ENCODE measurements at regions of chr19 and their contacts with region 1.

Region 1: GRCh38 chr19:49391581-49392399 is 3.7 kb downstream of the KASH5 start:
- DNase-seq: peak; percentile 67 to 89 (median 76)
- ATAC-seq: peak; percentile 76
- H3K4me3 ChIP-seq: no peak overlapping the region
- H3K4me3 Mint-ChIP-seq: no peak overlapping the region
- H3K27ac ChIP-seq: no peak overlapping the region
- H3K27ac Mint-ChIP-seq: no peak overlapping the region
- H3K4me1 ChIP-seq: peaks cover 23% of the 10 kb centered on the region
- H3K4me1 Mint-ChIP-seq: peaks cover 19% of the 10 kb centered on the region
- H3K27me3 ChIP-seq: no peaks in the 10 kb centered on the region
- H3K27me3 Mint-ChIP-seq: no peaks in the 10 kb centered on the region
- CTCF ChIP-seq: peak; percentile 95

Region 2: GRCh38 chr19:49374665-49375434 is 16.9 kb before region 1 on chr19:
- CTCF ChIA-PET with region 1: no interaction called
- POLR2A ChIA-PET with region 1: no interaction called
- intact Hi-C with region 1: no loop called
- DNase-seq: no peak
- ATAC-seq: no peak
- H3K4me3 ChIP-seq: no peak overlapping the region
- H3K4me3 Mint-ChIP-seq: no peak overlapping the region
- H3K27ac ChIP-seq: no peak overlapping the region
- H3K27ac Mint-ChIP-seq: no peak overlapping the region
- H3K4me1 ChIP-seq: no peaks in the 10 kb centered on the region
- H3K4me1 Mint-ChIP-seq: no peaks in the 10 kb centered on the region
- H3K27me3 ChIP-seq: no peaks in the 10 kb centered on the region
- H3K27me3 Mint-ChIP-seq: peaks cover 16% of the 10 kb centered on the region
- CTCF ChIP-seq: no peak

Region 3: DNA sequence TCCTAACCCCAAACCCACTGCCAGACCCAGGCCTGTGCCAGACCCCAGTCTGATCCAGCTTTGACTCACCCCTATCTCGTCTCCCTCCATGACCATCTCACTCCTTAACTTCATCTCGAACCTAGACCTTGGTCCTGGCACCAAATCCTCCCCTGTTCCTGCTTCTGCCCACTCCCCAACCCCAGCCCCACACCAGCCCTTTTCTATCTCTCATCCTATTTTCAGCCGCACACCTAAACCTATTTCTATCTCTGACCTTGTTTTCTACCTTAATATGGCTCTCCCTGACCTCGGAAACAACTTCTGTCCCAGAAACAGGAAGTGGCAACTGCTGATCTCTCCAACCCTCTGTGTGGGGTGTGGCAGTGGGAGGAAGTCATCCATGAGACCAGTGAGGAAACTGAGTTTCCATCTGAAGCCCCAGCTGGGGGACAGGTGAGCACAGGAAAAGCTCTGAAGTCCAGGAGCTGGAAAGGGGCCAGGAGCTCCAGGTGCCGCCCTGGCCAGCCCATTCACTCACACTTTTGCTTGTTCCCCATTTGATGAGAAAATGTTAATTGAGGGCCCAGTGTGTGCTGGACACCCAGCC is 17.7 kb after region 1 on chr19:
- CTCF ChIA-PET with region 1: interaction called, 10 read pairs
- POLR2A ChIA-PET with region 1: interaction called, 6 read pairs
- intact Hi-C with region 1: no loop called
- DNase-seq: peak in 4 of 14 experiments; percentile 42 to 75 (median 57)
- ATAC-seq: peak; percentile 61
- H3K4me3 ChIP-seq: peak overlapping the region; percentile 11
- H3K4me3 Mint-ChIP-seq: peak overlapping the region; percentile 49
- H3K27ac ChIP-seq: peak overlapping the region; percentile 17 to 65
- H3K27ac Mint-ChIP-seq: peak overlapping the region; percentile 82
- H3K4me1 ChIP-seq: peaks cover 72% of the 10 kb centered on the region
- H3K4me1 Mint-ChIP-seq: peaks cover 67% of the 10 kb centered on the region
- H3K27me3 ChIP-seq: no peaks in the 10 kb centered on the region
- H3K27me3 Mint-ChIP-seq: no peaks in the 10 kb centered on the region
- CTCF ChIP-seq: no peak

Region 4: DNA sequence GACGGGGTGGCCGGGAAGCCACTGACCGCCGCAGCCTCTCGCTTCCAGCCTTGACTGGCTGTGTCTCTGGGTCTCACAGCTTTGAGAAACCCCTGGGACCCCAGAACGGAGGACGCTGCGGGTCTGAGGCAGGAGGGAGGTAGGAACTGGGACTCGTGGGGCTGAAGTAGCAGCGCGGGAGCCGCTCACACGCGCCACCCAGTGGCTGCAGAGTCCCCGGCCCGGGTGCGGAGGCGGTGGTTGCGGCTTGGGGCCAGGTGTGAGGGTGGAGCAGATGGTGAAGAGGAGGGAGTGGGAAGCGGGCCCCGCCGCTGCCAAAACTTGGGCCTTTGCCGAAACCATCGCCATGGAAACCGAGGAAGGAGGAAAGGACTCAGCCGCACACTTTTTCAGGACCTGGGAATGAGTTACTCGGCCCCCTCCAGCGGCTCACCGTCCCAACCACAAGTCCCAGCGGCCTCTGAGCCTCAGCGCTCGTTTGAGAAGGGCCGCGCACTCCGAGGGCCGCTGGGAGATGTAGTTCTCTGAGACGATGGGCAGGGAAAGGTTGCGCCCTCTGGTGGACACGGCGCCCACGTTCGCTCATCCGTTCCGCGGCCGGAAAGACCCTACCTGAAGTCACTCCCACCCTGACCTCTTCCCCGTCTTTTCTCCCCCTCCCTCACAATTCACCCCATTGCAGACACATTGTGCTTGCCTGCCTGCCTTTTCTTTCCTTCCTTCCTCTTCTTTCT is 51.7 kb after region 1 on chr19:
- CTCF ChIA-PET with region 1: interaction called, 15 read pairs
- POLR2A ChIA-PET with region 1: interaction called, 4 read pairs
- intact Hi-C with region 1: loop called (anchors 1 kb)
- DNase-seq: peak; percentile 89 to 96 (median 91)
- ATAC-seq: peak; percentile 89
- H3K4me3 ChIP-seq: peak overlapping the region; percentile 66
- H3K4me3 Mint-ChIP-seq: peak overlapping the region; percentile 85
- H3K27ac ChIP-seq: no peak overlapping the region
- H3K27ac Mint-ChIP-seq: peak overlapping the region; percentile 84
- H3K4me1 ChIP-seq: peaks cover 47% of the 10 kb centered on the region
- H3K4me1 Mint-ChIP-seq: peaks cover 41% of the 10 kb centered on the region
- H3K27me3 ChIP-seq: peaks cover 39% of the 10 kb centered on the region in 2 experiments
- H3K27me3 Mint-ChIP-seq: peaks cover 47% of the 10 kb centered on the region
- CTCF ChIP-seq: peak; percentile 95

Region 5: GRCh38 chr19:49473868-49474544 is 82.2 kb after region 1 on chr19 and contains the start of gene FLT3LG:
- CTCF ChIA-PET with region 1: interaction called, 17 read pairs
- POLR2A ChIA-PET with region 1: interaction called, 5 read pairs
- intact Hi-C with region 1: loop called (anchors 1 kb)
- DNase-seq: peak; percentile 85 to 98 (median 90)
- ATAC-seq: peak; percentile 49
- H3K4me3 ChIP-seq: peak within 1 kb of the TSS; percentile 97
- H3K4me3 Mint-ChIP-seq: peak within 1 kb of the TSS; percentile 100
- H3K27ac ChIP-seq: peak within 1 kb of the TSS; percentile 90 to 98
- H3K27ac Mint-ChIP-seq: peak within 1 kb of the TSS; percentile 98
- H3K4me1 ChIP-seq: peaks cover 78% of the 10 kb centered on the region
- H3K4me1 Mint-ChIP-seq: peaks cover 59% of the 10 kb centered on the region
- H3K27me3 ChIP-seq: no peaks in the 10 kb centered on the region
- H3K27me3 Mint-ChIP-seq: no peaks in the 10 kb centered on the region
- CTCF ChIP-seq: peak; percentile 95
- total RNA-seq, gene FLT3LG: 311 to 325 TPM